ENCODE measurements at regions of chr21 and their contacts with region 1.

Region 1: GRCh38 chr21:41816220-41817165 is 49.6 kb upstream of the RIPK4 start:
- DNase-seq: peak; percentile 82
- H3K4me3 ChIP-seq: no peak overlapping the region
- H3K27ac ChIP-seq: peak overlapping the region; percentile 38
- H3K4me1 ChIP-seq: peaks cover 11% of the 10 kb centered on the region
- CTCF ChIP-seq: peak; percentile 86

Region 2: GRCh38 chr21:41641821-41642701 is 174.4 kb before region 1 on chr21:
- CTCF ChIA-PET with region 1: no interaction called
- POLR2A ChIA-PET with region 1: no interaction called
- intact Hi-C with region 1: no loop called
- DNase-seq: no peak
- H3K4me3 ChIP-seq: no peak overlapping the region
- H3K27ac ChIP-seq: no peak overlapping the region
- H3K4me1 ChIP-seq: peaks cover 2% of the 10 kb centered on the region
- CTCF ChIP-seq: no peak

Region 3: GRCh38 chr21:41921021-41921420 is 104.5 kb after region 1 on chr21:
- CTCF ChIA-PET with region 1: no interaction called
- POLR2A ChIA-PET with region 1: no interaction called
- intact Hi-C with region 1: loop called (anchors 1 kb)
- DNase-seq: peak; percentile 77
- H3K4me3 ChIP-seq: no peak overlapping the region
- H3K27ac ChIP-seq: peak overlapping the region; percentile 74
- H3K4me1 ChIP-seq: peaks cover 54% of the 10 kb centered on the region
- CTCF ChIP-seq: no peak